Dendritic cell treated with granulocyte-macrophage colony-stimulating factor and Interleukin-4, amounts not matched to agents 40 ng/mL and 50 ng/mL, for 4 days (primary cell): ENCODE measurements at regions of chr14 and their contacts with region 1.

Region 1: DNA sequence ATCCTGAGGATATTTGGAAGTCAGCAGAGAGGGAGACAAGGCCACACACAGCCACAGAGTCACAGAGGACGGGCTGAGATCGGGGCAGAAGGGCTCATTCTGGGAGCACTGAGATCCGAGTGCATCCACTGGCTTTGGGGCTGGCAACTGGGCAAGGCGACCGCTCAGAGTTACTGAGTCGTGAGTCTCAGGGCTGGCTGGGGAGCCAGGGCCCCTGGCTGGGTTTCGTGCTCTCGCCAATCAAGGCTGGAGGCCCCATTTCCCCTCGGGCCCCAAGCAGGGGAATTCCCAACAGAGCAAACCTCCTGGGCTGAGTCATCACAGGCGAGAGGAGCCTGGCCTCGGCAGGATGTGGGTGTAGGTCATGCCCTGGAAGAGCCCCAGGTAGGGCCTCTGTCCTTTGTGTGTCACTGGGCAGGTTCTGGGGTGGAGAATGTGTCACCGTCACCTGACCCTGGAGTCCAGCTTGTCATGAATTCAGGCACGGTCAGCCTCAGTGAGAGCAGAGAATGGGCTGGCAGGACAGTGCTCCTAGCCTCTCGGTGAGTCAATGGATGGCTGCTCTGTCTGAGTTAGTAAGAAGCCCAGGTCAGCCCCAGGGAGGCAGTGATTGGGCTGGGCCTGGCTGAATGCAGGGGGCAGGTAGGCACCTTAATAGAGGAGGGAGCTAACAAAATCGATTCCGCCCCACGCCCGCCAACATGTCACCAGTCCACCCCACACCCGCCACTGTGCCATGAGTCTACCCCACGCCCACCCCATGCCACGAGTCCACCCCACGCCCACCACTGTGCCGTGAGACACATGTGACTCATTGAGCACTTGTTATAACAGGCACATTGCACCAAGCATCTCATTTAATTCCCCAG is 16.9 kb downstream of the ASB2 start:
- H3K4me3 Mint-ChIP-seq: no peak overlapping the region
- H3K27ac Mint-ChIP-seq: peak overlapping the region; percentile 79
- H3K4me1 Mint-ChIP-seq: peaks cover 95% of the 10 kb centered on the region
- H3K27me3 Mint-ChIP-seq: peaks cover 2% of the 10 kb centered on the region

Region 2: GRCh38 chr14:94392510-94392935 is 433.1 kb after region 1 on chr14:
- intact Hi-C with region 1: loop called (anchors 10 kb)
- H3K4me3 Mint-ChIP-seq: no peak overlapping the region
- H3K27ac Mint-ChIP-seq: peak overlapping the region; percentile 90
- H3K4me1 Mint-ChIP-seq: peaks cover 93% of the 10 kb centered on the region
- H3K27me3 Mint-ChIP-seq: no peaks in the 10 kb centered on the region